B cell (primary cell): ENCODE measurements at regions of chr13 and their contacts with region 1.

Region 1: GRCh38 chr13:20546556-20546955 is 20.4 kb upstream of the IFT88 start:
- DNase-seq: peak; percentile 61
- ATAC-seq: peak; percentile 70
- H3K4me3 ChIP-seq: peak overlapping the region in 1 of 5 experiments; percentile 14
- H3K4me3 Mint-ChIP-seq: peak overlapping the region; percentile 42
- H3K27ac ChIP-seq: peak overlapping the region in 1 of 2 donors; percentile 64
- H3K27ac Mint-ChIP-seq: peak overlapping the region; percentile 62
- H3K4me1 ChIP-seq: peaks cover 37 to 46% of the 10 kb centered on the region in 2 donors
- H3K4me1 Mint-ChIP-seq: peaks cover 38% of the 10 kb centered on the region
- H3K27me3 ChIP-seq: no peaks in the 10 kb centered on the region
- H3K27me3 Mint-ChIP-seq: no peaks in the 10 kb centered on the region
- CTCF ChIP-seq: no peak

Region 2: GRCh38 chr13:20525690-20526544 is 20.6 kb before region 1 on chr13 and contains the start of gene CRYL1:
- CTCF ChIA-PET with region 1: interaction called, 5 read pairs
- POLR2A ChIA-PET with region 1: interaction called, 4 read pairs
- intact Hi-C with region 1: loop called (anchors 1 kb)
- DNase-seq: peak; percentile 82
- ATAC-seq: peak; percentile 90
- H3K4me3 ChIP-seq: peak within 1 kb of the TSS; percentile 65 to 79 (median 74)
- H3K4me3 Mint-ChIP-seq: peak within 1 kb of the TSS; percentile 91
- H3K27ac ChIP-seq: peak within 1 kb of the TSS; percentile 60 to 73
- H3K27ac Mint-ChIP-seq: peak within 1 kb of the TSS; percentile 86
- H3K4me1 ChIP-seq: peaks cover 6 to 15% of the 10 kb centered on the region in 2 donors
- H3K4me1 Mint-ChIP-seq: peaks cover 14% of the 10 kb centered on the region
- H3K27me3 ChIP-seq: peaks cover 0 to 5% (median 1%) of the 10 kb centered on the region in 4 experiments
- H3K27me3 Mint-ChIP-seq: peaks cover 6% of the 10 kb centered on the region
- CTCF ChIP-seq: no peak
- total RNA-seq, gene CRYL1: 6.5 and 11.8 TPM in 2 replicates

Region 3: GRCh38 chr13:20573186-20573585 is 26.6 kb after region 1 on chr13:
- CTCF ChIA-PET with region 1: no interaction called
- POLR2A ChIA-PET with region 1: no interaction called
- intact Hi-C with region 1: no loop called
- DNase-seq: no peak
- ATAC-seq: no peak
- H3K4me3 ChIP-seq: no peak overlapping the region
- H3K4me3 Mint-ChIP-seq: no peak overlapping the region
- H3K27ac ChIP-seq: no peak overlapping the region
- H3K27ac Mint-ChIP-seq: no peak overlapping the region
- H3K4me1 ChIP-seq: peaks cover 0 to under 1% of the 10 kb centered on the region in 2 donors
- H3K4me1 Mint-ChIP-seq: peaks cover 4% of the 10 kb centered on the region
- H3K27me3 ChIP-seq: no peaks in the 10 kb centered on the region
- H3K27me3 Mint-ChIP-seq: no peaks in the 10 kb centered on the region
- CTCF ChIP-seq: no peak

Region 4: DNA sequence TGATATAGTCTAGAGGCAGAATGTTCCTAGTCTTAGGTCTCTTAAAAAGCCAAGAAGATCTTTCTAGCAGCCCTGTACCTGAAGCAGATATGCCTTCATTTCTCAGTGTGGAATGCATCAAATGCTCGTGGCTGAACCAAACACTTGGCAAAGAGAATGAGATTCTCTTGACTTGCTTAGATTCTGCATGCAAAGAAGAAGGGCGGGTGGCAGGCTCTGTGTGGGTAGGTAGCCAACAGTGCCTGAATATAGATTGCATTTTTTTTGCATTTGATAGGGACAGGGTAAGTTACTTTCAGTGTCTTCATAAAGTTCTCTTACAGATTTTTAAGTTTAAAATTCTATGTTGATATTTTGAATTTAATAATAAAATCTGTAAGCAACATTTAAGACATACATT is 47.7 kb after region 1 on chr13:
- CTCF ChIA-PET with region 1: no interaction called
- POLR2A ChIA-PET with region 1: no interaction called
- intact Hi-C with region 1: no loop called
- DNase-seq: no peak
- ATAC-seq: no peak
- H3K4me3 ChIP-seq: no peak overlapping the region
- H3K4me3 Mint-ChIP-seq: no peak overlapping the region
- H3K27ac ChIP-seq: no peak overlapping the region
- H3K27ac Mint-ChIP-seq: no peak overlapping the region
- H3K4me1 ChIP-seq: no peaks in the 10 kb centered on the region
- H3K4me1 Mint-ChIP-seq: no peaks in the 10 kb centered on the region
- H3K27me3 ChIP-seq: no peaks in the 10 kb centered on the region
- H3K27me3 Mint-ChIP-seq: no peaks in the 10 kb centered on the region
- CTCF ChIP-seq: no peak